OCI-LY7 (cell line): ENCODE measurements at regions of chr1 and their contacts with region 1.

Region 1: GRCh38 chr1:244451951-244452795 is 464 bp upstream of the ADSS2 start:
- DNase-seq: peak; percentile 100
- H3K4me3 ChIP-seq: peak overlapping the region; percentile 98
- H3K27ac ChIP-seq: peak overlapping the region; percentile 85
- H3K4me1 ChIP-seq: peaks cover 32% of the 10 kb centered on the region
- CTCF ChIP-seq: peak; percentile 71

Region 2: GRCh38 chr1:244047621-244048471 is 404.3 kb before region 1 on chr1:
- CTCF ChIA-PET with region 1: no interaction called
- POLR2A ChIA-PET with region 1: no interaction called
- intact Hi-C with region 1: loop called (anchors 5 kb)
- DNase-seq: no peak
- H3K4me3 ChIP-seq: peak overlapping the region; percentile 81
- H3K27ac ChIP-seq: peak overlapping the region; percentile 71
- H3K4me1 ChIP-seq: peaks cover 41% of the 10 kb centered on the region
- CTCF ChIP-seq: no peak

Region 3: GRCh38 chr1:244154872-244155531 is 297.2 kb before region 1 on chr1:
- CTCF ChIA-PET with region 1: no interaction called
- POLR2A ChIA-PET with region 1: no interaction called
- intact Hi-C with region 1: no loop called
- DNase-seq: no peak
- H3K4me3 ChIP-seq: no peak overlapping the region
- H3K27ac ChIP-seq: no peak overlapping the region
- H3K4me1 ChIP-seq: no peaks in the 10 kb centered on the region
- CTCF ChIP-seq: no peak

Region 4: GRCh38 chr1:244296447-244296846 is 155.7 kb before region 1 on chr1:
- CTCF ChIA-PET with region 1: no interaction called
- POLR2A ChIA-PET with region 1: no interaction called
- intact Hi-C with region 1: loop called (anchors 10 kb)
- DNase-seq: no peak
- H3K4me3 ChIP-seq: no peak overlapping the region
- H3K27ac ChIP-seq: no peak overlapping the region
- H3K4me1 ChIP-seq: peaks cover 4% of the 10 kb centered on the region
- CTCF ChIP-seq: no peak

Region 5: GRCh38 chr1:244409701-244410100 is 42.5 kb before region 1 on chr1:
- CTCF ChIA-PET with region 1: no interaction called
- POLR2A ChIA-PET with region 1: interaction called, 11 read pairs
- intact Hi-C with region 1: no loop called
- DNase-seq: no peak
- H3K4me3 ChIP-seq: no peak overlapping the region
- H3K27ac ChIP-seq: no peak overlapping the region
- H3K4me1 ChIP-seq: no peaks in the 10 kb centered on the region
- CTCF ChIP-seq: no peak

Region 6: GRCh38 chr1:244652699-244653466 is 200.7 kb after region 1 on chr1 and contains the start of gene DESI2:
- CTCF ChIA-PET with region 1: no interaction called
- POLR2A ChIA-PET with region 1: interaction called, 3 read pairs
- intact Hi-C with region 1: loop called (anchors 1 kb)
- DNase-seq: peak; percentile 100
- H3K4me3 ChIP-seq: peak within 1 kb of the TSS; percentile 82
- H3K27ac ChIP-seq: peak within 1 kb of the TSS; percentile 81
- H3K4me1 ChIP-seq: peaks cover 27% of the 10 kb centered on the region
- CTCF ChIP-seq: peak; percentile 71
- total RNA-seq, gene DESI2: 40.0 and 40.6 TPM in 2 replicates